ENCODE measurements at regions of chr5 and their contacts with region 1.

Region 1: DNA sequence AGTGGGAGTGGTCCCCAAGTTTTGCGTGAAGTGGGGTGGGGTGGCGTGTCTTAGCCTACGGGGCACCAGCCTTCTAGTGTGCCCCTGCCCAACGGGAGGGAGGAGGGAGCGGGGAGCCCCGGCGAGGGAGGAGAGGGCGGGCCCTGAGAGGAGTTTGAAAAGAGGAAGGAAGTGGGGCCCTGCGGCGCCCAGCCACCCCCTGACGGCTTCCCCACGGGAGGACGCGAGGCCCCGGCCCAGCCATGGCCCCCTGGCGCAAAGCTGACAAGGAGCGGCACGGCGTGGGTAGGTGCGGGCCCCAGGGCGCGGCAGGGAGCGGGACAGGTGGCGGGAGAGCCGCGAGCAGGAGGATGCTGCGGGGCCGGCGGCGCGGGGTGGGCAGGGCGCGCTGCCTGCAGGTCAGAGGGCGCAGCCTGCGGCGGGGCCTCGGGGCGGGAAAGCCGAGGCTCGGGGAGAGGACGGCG is at the start of gene DOCK2:
- DNase-seq: peak; percentile 87
- ATAC-seq: peak; percentile 83
- H3K4me3 Mint-ChIP-seq: peak within 1 kb of the TSS; percentile 83
- H3K27ac Mint-ChIP-seq: peak within 1 kb of the TSS; percentile 93
- H3K4me1 Mint-ChIP-seq: peaks cover 53% of the 10 kb centered on the region
- H3K27me3 Mint-ChIP-seq: peaks cover 4% of the 10 kb centered on the region
- total RNA-seq, gene DOCK2: 318 to 320 TPM

Region 2: DNA sequence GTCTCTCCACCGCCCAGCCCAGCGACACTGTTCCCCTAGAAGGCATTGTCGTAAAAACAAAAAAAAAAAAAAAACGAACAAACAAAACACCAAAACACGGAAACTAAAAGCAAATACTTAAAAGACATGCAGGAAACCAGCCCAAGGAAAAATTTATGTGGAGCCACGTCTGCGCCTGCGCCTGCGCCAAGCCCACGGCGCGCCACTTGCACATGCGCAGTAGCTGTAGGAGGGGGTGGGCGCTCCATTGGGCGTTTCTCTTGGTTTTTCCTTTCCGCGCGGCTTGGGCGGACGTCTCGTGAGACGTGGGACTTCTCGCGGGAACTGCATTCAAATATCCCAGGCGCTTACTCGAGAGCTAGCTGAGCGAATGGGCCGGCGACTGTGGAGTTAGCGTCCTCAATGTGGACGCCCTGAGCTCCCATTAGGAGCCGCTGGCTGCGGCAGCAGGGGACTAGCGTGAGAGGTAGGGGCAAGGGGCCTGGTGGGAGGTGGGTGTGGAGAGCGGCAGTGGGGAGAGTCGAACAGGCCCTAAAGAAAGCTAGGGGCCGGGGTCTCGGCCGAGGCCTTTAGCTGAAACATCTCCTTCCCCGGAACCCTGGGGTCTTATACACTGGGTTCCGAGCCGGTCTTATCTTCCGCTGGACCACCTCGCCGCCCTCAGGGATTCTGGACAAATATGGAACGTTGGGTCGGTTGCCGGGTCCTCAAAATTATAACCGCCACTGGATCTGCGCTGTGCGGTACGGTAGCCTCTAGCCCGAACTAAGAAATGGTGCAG is 53.5 kb before region 1 on chr5 and contains the start of gene SPDL1:
- CTCF ChIA-PET with region 1: interaction called, 3 read pairs
- POLR2A ChIA-PET with region 1: interaction called, 32 read pairs
- DNase-seq: peak; percentile 97
- ATAC-seq: peak; percentile 96
- H3K4me3 Mint-ChIP-seq: peak within 1 kb of the TSS; percentile 98
- H3K27ac Mint-ChIP-seq: peak within 1 kb of the TSS; percentile 97
- H3K4me1 Mint-ChIP-seq: peaks cover 36% of the 10 kb centered on the region
- H3K27me3 Mint-ChIP-seq: peaks cover 2% of the 10 kb centered on the region
- total RNA-seq, gene SPDL1: 63.6 to 64.1 TPM

Region 3: DNA sequence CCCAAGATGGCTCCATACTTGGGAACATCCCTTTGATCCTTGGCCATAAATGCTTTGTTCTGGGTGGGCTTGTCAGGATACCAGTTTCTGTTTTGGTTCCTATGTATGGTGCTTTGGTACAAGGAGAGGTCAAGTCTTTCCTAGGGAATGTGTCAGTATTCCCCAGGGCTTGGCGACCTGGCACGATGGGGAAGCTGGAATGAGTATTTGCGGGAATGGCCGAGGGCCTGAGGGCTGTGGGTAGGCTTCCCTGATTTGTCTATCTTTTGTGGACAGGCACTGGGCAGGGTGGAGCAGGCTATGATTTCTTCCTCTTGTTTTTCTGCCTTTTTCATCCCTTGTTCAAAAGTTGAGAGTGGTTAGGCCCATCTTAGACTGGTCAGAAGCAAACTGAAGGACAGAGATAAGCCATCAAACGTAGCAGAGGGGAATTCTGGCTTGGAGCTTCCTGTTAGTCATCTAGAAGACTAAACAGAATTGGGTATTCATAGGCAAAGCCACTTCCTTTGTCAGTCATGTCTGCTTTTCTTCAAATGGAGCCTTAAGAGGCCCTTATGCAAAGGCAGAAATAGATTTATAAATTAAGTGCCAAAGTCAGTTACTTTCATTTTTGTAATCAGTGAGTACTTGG is 13.7 kb after region 1 on chr5:
- CTCF ChIA-PET with region 1: interaction called, 7 read pairs
- POLR2A ChIA-PET with region 1: interaction called, 40 read pairs
- DNase-seq: peak; percentile 35
- ATAC-seq: peak; percentile 37
- H3K4me3 Mint-ChIP-seq: peak overlapping the region; percentile 66
- H3K27ac Mint-ChIP-seq: peak overlapping the region; percentile 89
- H3K4me1 Mint-ChIP-seq: peaks cover 99% of the 10 kb centered on the region
- H3K27me3 Mint-ChIP-seq: no peaks in the 10 kb centered on the region

Region 4: GRCh38 chr5:169670769-169671525 is 33.8 kb after region 1 on chr5:
- CTCF ChIA-PET with region 1: interaction called, 6 read pairs
- POLR2A ChIA-PET with region 1: interaction called, 12 read pairs
- DNase-seq: no peak
- ATAC-seq: no peak
- H3K4me3 Mint-ChIP-seq: no peak overlapping the region
- H3K27ac Mint-ChIP-seq: no peak overlapping the region
- H3K4me1 Mint-ChIP-seq: peaks cover 15% of the 10 kb centered on the region
- H3K27me3 Mint-ChIP-seq: no peaks in the 10 kb centered on the region